HEK293 (cell line): ENCODE measurements at regions of chr3 and their contacts with region 1.

Region 1: GRCh38 chr3:185572183-185572582 is 13.9 kb upstream of the SENP2 start:
- H3K4me3 ChIP-seq: no peak overlapping the region
- H3K27ac ChIP-seq: no peak overlapping the region
- H3K4me1 ChIP-seq: no peaks in the 10 kb centered on the region
- CTCF ChIP-seq: no peak

Region 2: DNA sequence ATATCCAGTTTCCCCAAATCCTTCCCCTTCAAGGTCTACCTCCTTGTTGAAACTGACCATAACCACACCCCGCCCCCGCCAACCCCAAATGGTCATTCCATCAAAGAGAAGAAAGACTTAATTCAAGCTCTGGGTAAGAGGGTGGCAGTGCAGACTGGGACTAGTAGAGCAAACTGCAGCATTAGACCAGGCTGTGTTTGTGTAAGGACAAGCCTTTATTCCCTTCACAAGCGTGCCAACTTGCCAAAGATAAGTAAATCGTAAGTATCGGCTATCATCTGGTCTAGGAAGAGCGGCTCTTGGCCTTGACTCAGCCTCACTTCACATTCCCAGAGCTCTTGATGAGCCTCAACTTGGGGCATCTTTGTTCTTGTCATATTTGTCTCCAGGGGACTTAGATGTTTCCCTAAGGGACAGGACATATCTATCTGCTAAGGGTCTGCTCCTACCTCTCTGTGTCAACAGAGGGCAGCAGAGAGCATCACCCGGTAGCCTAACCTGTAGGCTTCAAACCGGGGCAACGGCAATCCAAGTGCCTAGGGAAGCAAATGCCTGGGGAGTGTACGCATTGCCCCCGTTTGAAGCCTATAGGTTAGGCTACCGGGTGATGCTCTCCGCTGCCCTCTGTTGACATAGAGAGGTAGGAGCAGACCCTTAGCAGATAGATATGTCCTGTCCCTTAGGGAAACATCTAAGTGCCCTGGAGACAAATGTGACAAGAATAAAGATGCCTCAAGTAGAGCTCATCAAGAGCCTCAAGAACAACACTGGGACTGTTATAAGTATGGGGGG is 218.2 kb before region 1 on chr3:
- CTCF ChIA-PET with region 1: interaction called, 10 read pairs
- POLR2A ChIA-PET with region 1: no interaction called
- H3K4me3 ChIP-seq: no peak overlapping the region
- H3K27ac ChIP-seq: no peak overlapping the region
- H3K4me1 ChIP-seq: no peaks in the 10 kb centered on the region
- CTCF ChIP-seq: no peak

Region 3: DNA sequence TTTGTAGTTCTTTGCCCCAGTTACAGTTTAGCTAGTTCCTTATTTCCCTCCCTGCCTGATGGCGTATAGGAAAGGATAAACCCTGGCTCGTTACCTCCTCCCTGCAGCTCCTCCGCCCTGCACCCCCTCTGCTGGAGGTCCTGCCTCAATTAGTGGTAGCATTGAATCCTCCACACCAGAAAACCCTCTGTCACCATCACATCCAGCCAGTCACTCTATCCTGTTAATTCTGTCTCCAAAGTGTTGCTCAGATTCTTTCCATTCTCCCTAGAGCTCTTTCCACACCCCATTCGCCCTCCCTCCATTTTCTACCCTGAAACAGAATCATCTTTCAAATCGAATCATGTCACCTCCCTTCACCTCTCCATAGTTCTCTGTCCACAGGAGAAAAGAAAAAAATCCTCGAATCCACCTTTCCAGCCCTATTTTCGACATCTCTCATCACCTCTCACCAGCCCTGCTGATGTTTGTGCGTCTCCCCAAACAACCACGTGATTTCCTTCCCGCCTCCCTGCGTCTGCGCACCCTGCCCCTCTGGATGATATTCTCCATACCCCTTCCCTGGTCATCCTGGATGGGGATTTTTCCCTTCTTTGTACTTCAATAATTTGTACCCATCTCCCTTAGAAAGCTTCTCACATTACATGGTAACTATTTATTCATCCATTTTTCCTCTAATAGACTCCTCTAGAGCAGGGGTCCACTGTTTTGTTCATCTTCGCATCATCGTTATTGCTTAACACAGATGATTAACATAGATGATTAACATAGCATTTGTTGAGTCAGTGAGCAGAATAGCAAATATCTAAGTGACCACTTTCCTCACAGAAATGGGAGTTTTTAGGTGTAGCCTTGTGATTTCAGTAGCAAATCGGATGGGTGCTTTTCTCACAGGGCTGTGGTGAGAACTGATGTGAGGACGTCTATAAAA is 172.2 kb before region 1 on chr3:
- CTCF ChIA-PET with region 1: no interaction called
- POLR2A ChIA-PET with region 1: no interaction called
- H3K4me3 ChIP-seq: no peak overlapping the region
- H3K27ac ChIP-seq: no peak overlapping the region
- H3K4me1 ChIP-seq: peaks cover 19% of the 10 kb centered on the region
- CTCF ChIP-seq: no peak

Region 4: DNA sequence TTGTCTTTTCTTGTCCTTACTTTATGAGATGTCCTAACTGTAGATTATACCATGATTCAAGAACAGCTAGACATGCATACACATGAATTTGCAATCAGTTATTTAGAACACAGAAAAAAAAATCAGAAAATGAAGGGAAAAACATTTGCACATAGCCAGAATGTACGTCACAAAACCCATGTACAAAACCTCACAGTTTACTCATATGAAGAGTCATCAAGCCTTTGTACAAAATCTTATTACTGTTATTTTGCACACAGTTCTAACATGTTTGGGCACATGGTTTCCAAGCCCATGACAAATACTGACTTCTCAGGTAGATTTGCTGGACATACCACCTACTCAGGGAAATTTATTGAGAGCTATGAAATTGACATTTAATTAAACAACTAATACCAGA is 161.1 kb before region 1 on chr3:
- CTCF ChIA-PET with region 1: no interaction called
- POLR2A ChIA-PET with region 1: no interaction called
- H3K4me3 ChIP-seq: no peak overlapping the region
- H3K27ac ChIP-seq: no peak overlapping the region
- H3K4me1 ChIP-seq: no peaks in the 10 kb centered on the region
- CTCF ChIP-seq: no peak